H1 (cell line): ENCODE measurements at regions of chr7 and their contacts with region 1.

Region 1: DNA sequence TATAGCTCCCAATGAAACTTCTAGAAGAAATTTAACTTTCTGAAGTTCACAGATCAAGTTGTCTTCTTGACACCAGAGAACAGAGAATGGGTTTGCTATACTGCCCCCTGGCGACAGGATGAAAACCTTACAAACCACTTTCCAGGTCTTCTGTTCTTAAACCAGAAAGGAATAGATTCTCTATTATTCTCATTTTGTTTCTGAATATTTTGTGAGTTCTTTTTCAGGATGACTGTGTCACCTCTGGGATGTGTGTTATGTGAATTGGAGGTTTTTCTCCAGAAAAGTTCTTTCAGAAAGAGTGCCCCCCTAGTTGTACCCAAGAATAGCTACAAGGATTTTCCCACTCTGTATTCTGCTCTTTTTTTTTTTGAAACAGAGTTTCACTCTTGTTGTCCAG is 6.3 kb downstream of the IFT22 start:
- DNase-seq: peak in 1 of 2 experiments; percentile 81
- H3K4me3 ChIP-seq: no peak overlapping the region
- H3K27ac ChIP-seq: no peak overlapping the region
- H3K4me1 ChIP-seq: no peaks in the 10 kb centered on the region
- H3K27me3 ChIP-seq: no peaks in the 10 kb centered on the region
- CTCF ChIP-seq: peak in 2 of 3 experiments; percentile 57 to 74; a peak in 2 of 4 replicates
- EP300 ChIP-seq: no peak
- POLR2A ChIP-seq: no peak
- RAD21 ChIP-seq: peak; percentile 39 to 57; a peak in 3 of 4 replicates

Region 2: GRCh38 chr7:101294039-101294831 is 21.1 kb before region 1 on chr7:
- CTCF ChIA-PET with region 1: interaction called, 13 read pairs
- POLR2A ChIA-PET with region 1: interaction called, 38 read pairs
- DNase-seq: peak; percentile 82 to 92
- H3K4me3 ChIP-seq: peak overlapping the region in 2 of 4 experiments; percentile 11 to 50; a peak in 3 of 8 replicates
- H3K27ac ChIP-seq: peak overlapping the region; percentile 91
- H3K4me1 ChIP-seq: peaks cover 9 to 37% (median 22%) of the 10 kb centered on the region in 4 experiments
- H3K27me3 ChIP-seq: no peaks in the 10 kb centered on the region
- CTCF ChIP-seq: peak in 1 of 3 experiments; percentile 3; a peak in 1 of 4 replicates
- EP300 ChIP-seq: peak in 1 of 2 experiments; percentile 96; a peak in 2 of 3 replicates
- POLR2A ChIP-seq: peak; percentile 70 to 78
- RAD21 ChIP-seq: no peak

Region 3: GRCh38 chr7:101299511-101300464 is 15.5 kb before region 1 on chr7:
- CTCF ChIA-PET with region 1: interaction called, 18 read pairs
- POLR2A ChIA-PET with region 1: interaction called, 68 read pairs
- DNase-seq: peak in 1 of 2 experiments; percentile 73
- H3K4me3 ChIP-seq: peak overlapping the region; percentile 69 to 97 (median 74)
- H3K27ac ChIP-seq: peak overlapping the region; percentile 74; the same call in 1 of the 2 replicates
- H3K4me1 ChIP-seq: peaks cover 6 to 18% (median 9%) of the 10 kb centered on the region in 4 experiments
- H3K27me3 ChIP-seq: no peaks in the 10 kb centered on the region
- CTCF ChIP-seq: no peak
- EP300 ChIP-seq: no peak
- POLR2A ChIP-seq: peak; percentile 26 to 64
- RAD21 ChIP-seq: no peak; a peak in 1 of 4 replicates

Region 4: DNA sequence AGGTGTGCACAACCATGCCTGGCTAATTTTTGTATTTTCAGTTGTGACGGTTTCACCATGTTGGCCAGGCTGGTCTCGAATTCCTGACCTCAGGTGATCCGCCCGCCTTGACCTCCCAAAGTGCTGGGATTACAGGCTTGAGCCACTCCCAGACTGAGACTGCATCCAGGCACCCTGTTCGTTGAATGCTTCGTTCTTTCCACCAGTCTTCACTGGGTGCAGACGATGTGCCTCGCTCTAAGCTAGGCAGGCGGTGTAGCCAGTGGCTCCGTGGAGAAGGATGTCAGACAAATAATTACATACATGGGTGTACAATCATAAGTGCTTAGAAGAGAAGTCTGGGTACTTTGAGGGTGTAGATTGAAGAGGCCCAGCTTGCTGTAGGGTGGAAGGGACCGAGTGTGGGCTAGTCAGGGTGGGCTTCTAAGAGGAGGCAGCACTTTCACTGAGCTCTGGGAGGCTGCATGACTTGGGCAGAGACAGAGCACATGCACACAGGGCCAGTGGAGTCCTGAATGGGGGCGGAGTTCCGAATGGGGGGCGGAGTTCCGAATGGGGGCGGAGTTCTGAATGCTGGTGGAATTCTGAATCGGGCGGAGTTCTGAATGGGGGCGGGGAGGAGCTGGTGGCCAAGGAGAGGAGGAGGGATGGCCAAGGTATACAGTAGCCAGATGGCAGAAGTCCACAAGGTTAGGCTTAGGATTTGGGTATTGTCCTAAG is 121.7 kb after region 1 on chr7:
- CTCF ChIA-PET with region 1: interaction called, 28 read pairs
- POLR2A ChIA-PET with region 1: interaction called, 3 read pairs
- DNase-seq: peak; percentile 44 to 91
- H3K4me3 ChIP-seq: no peak overlapping the region
- H3K27ac ChIP-seq: no peak overlapping the region
- H3K4me1 ChIP-seq: peaks cover 4 to 19% (median 11%) of the 10 kb centered on the region in 4 experiments
- H3K27me3 ChIP-seq: no peaks in the 10 kb centered on the region
- CTCF ChIP-seq: no peak
- EP300 ChIP-seq: no peak
- POLR2A ChIP-seq: no peak
- RAD21 ChIP-seq: no peak